Mammary epithelial cell (primary cell): ENCODE measurements at regions of chr10 and their contacts with region 1.

Region 1: DNA sequence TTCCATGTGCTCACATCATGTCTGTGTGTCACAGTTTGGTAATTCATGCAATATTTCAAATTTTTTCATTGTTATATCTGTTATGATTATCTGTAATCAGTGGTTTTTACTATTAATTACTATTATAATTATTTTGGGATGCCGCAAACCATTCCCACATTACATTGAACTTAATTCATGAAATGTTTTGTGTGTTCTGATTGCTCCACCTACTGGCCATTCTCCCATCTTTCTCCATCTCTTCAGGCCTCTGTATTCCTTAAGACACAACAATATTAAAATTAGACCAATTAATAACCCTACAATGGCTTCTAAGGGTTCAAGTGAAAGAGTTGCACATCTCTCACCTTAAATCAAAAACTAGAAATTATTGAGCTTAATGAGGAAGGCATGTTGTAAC is 398.5 kb downstream of the PCDH15 start:
- DNase-seq: peak; percentile 32
- H3K4me3 ChIP-seq: no peak overlapping the region
- H3K27ac ChIP-seq: no peak overlapping the region
- H3K4me1 ChIP-seq: no peaks in the 10 kb centered on the region
- H3K27me3 ChIP-seq: peaks cover 2% of the 10 kb centered on the region
- CTCF ChIP-seq: peak; percentile 31 to 59

Region 2: GRCh38 chr10:53209944-53210611 is 1192.5 kb before region 1 on chr10:
- CTCF ChIA-PET with region 1: no interaction called
- dilution Hi-C with region 1: no loop called
- in situ Hi-C with region 1: no loop called
- intact Hi-C with region 1: loop called (anchors 10 kb)
- DNase-seq: peak; percentile 39
- H3K4me3 ChIP-seq: no peak overlapping the region
- H3K27ac ChIP-seq: no peak overlapping the region
- H3K4me1 ChIP-seq: no peaks in the 10 kb centered on the region
- H3K27me3 ChIP-seq: no peaks in the 10 kb centered on the region
- CTCF ChIP-seq: peak; percentile 64 to 66

Region 3: GRCh38 chr10:53839440-53840039 is 563.0 kb before region 1 on chr10:
- CTCF ChIA-PET with region 1: no interaction called
- dilution Hi-C with region 1: no loop called
- in situ Hi-C with region 1: no loop called
- intact Hi-C with region 1: loop called (anchors 2 kb)
- DNase-seq: peak; percentile 8
- H3K4me3 ChIP-seq: no peak overlapping the region
- H3K27ac ChIP-seq: no peak overlapping the region
- H3K4me1 ChIP-seq: peaks cover 5% of the 10 kb centered on the region
- H3K27me3 ChIP-seq: no peaks in the 10 kb centered on the region
- CTCF ChIP-seq: peak; percentile 41 to 59

Region 4: DNA sequence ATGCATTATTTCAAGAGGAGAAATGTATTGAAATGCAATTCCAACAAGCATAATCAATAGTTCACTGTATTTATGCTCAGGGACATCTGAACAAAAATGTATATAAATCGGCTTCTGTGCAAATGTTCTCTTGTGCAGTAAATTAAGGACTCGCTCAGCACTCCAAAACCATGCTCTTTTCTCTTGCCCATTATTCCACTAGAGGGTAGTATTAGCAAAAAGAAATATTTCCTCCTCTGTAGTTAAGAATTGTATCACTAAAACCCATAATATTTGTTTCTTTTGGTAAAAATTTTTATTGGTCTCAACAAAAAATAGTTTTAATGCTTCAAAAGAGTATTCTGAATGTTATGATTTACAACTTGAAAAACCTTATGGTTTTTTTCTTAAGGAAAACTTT is 404.6 kb before region 1 on chr10:
- CTCF ChIA-PET with region 1: no interaction called
- dilution Hi-C with region 1: no loop called
- in situ Hi-C with region 1: no loop called
- intact Hi-C with region 1: loop called (anchors 1 kb)
- DNase-seq: peak; percentile 0
- H3K4me3 ChIP-seq: no peak overlapping the region
- H3K27ac ChIP-seq: no peak overlapping the region
- H3K4me1 ChIP-seq: no peaks in the 10 kb centered on the region
- H3K27me3 ChIP-seq: no peaks in the 10 kb centered on the region
- CTCF ChIP-seq: peak in 1 of 2 donors; percentile 44

Region 5: GRCh38 chr10:54133203-54133602 is 269.4 kb before region 1 on chr10:
- CTCF ChIA-PET with region 1: no interaction called
- dilution Hi-C with region 1: no loop called
- in situ Hi-C with region 1: no loop called
- intact Hi-C with region 1: loop called (anchors 2 kb)
- DNase-seq: no peak
- H3K4me3 ChIP-seq: no peak overlapping the region
- H3K27ac ChIP-seq: no peak overlapping the region
- H3K4me1 ChIP-seq: no peaks in the 10 kb centered on the region
- H3K27me3 ChIP-seq: no peaks in the 10 kb centered on the region
- CTCF ChIP-seq: peak; percentile 18 to 47

Region 6: GRCh38 chr10:54454271-54454670 is 51.7 kb after region 1 on chr10:
- CTCF ChIA-PET with region 1: no interaction called
- dilution Hi-C with region 1: no loop called
- in situ Hi-C with region 1: no loop called
- intact Hi-C with region 1: no loop called
- DNase-seq: no peak
- H3K4me3 ChIP-seq: no peak overlapping the region
- H3K27ac ChIP-seq: no peak overlapping the region
- H3K4me1 ChIP-seq: no peaks in the 10 kb centered on the region
- H3K27me3 ChIP-seq: no peaks in the 10 kb centered on the region
- CTCF ChIP-seq: no peak

Region 7: GRCh38 chr10:54501929-54502328 is 99.4 kb after region 1 on chr10:
- CTCF ChIA-PET with region 1: no interaction called
- dilution Hi-C with region 1: no loop called
- in situ Hi-C with region 1: no loop called
- intact Hi-C with region 1: no loop called
- DNase-seq: no peak
- H3K4me3 ChIP-seq: no peak overlapping the region
- H3K27ac ChIP-seq: no peak overlapping the region
- H3K4me1 ChIP-seq: no peaks in the 10 kb centered on the region
- H3K27me3 ChIP-seq: no peaks in the 10 kb centered on the region
- CTCF ChIP-seq: no peak